Activated naive CD4-positive, alpha-beta T cell treated with anti-CD3 and anti-CD28 coated beads for 36 hours (primary cell): ENCODE measurements at regions of chr18 and their contacts with region 1.

Region 1: DNA sequence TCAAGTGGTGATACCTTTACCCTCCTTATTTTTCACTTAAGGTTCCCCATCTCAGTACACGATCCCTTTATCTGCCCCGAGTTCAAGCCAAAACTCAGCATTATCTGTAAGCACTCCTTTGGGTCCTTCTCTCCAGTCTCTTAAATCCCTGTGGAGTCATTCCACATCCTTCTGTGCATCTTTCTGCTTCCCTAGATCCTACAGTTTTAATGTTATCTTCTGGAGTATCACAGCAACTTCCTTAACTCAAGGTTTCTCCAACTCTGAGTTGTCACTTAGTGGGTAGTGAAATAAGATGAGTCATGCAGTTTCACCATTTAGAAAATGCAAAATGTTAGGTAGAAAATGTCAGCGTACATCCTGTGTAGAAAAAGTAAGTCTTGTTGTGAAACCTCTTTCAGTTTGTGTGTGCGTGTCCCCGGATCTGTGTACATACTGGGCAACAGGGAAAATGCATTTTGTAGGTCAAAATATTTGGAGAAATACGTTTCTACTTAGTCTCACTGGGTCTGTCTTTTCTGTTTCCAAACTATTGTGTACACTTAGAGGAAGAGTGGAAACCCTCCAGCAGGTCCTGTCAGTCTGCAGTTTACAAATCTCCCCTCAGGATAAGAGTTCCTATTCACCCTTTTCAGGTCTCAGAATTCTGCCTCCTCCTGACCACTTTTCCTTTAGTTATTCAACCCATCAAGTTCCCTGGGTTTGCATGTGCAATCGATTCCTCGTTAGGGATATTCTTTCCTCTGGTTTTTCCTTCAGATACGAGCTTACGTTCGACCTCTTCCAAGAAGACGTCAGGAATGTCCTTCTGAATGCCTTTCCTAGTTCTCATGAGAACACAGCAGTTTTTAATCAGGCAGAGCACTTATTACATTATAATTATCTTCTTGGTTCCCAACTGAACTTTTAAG is 154.8 kb downstream of the TGIF1 start:
- DNase-seq: peak; percentile 60
- H3K4me3 Mint-ChIP-seq: no peak overlapping the region
- H3K27ac Mint-ChIP-seq: no peak overlapping the region
- H3K4me1 Mint-ChIP-seq: peaks cover 13% of the 10 kb centered on the region
- H3K27me3 Mint-ChIP-seq: no peaks in the 10 kb centered on the region

Region 2: DNA sequence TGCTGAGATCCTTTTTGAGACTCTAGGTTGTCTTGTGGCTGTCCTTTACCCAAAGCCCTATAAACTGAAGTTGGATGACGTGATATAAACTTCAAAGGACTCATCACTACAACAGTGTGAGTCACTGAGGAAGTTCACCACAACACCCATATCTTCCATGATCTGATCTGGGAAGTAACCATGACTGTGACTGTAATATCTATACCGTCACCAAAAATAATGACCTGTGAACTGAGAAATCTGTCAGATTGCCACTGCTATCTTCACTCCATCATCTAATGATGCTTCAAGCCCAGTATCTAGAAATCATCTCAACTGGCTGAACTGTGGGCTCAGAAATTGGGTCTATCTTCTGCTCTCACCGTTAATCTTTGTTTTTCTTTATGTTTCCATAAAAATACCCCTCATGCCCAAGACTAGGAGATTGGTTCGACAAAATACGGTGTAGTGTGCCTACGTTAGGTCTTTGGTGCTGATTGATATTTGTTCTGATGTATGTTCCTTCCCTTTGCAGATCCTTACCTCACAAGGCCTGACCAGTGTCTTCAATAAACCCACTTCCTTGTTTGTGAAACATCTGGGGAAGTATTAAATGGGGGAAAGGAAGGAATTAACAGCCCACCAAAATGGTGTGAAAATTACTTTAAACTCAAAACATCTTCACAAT is 264.6 kb before region 1 on chr18:
- CTCF ChIA-PET with region 1: no interaction called
- intact Hi-C with region 1: loop called (anchors 1 kb)
- DNase-seq: peak; percentile 26
- H3K4me3 Mint-ChIP-seq: no peak overlapping the region
- H3K27ac Mint-ChIP-seq: peak overlapping the region; percentile 62
- H3K4me1 Mint-ChIP-seq: peaks cover 25% of the 10 kb centered on the region
- H3K27me3 Mint-ChIP-seq: no peaks in the 10 kb centered on the region

Region 3: DNA sequence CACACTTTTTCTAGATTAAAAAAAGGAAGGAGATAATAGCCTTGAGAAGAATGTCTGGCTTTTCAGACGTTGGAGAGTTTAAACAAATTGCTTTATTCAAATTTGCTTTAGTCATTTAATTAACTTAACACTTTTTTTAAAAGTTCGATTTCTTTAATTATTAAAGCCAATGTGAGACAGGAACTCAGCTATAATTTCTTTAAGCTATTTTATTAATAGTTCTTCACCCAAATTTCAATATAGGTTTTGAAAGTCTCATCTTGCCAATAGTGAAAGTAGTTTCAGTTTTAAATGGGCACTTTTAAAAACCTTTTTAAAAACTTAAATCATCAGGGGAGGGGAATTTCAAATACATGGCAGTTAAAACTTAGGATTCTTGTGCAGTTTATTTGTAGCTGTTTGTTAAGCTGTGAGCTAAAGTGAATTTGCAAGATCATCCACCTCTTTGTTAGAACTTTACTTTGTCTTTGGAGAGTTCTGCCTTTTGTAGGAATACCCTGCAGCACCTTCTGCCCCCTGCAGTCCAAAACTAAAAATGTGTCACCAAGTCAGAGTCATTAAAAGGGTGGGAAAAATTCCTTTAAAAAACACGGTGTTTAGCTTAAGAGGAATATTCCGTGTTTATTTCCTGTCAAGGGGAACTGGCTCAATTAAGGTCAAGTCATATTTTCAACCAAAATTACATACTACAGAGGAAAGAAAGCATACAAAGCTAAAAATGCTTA is 150.2 kb before region 1 on chr18:
- CTCF ChIA-PET with region 1: interaction called, 8 read pairs
- intact Hi-C with region 1: loop called (anchors 1 kb)
- DNase-seq: peak; percentile 31
- H3K4me3 Mint-ChIP-seq: peak overlapping the region; percentile 89
- H3K27ac Mint-ChIP-seq: peak overlapping the region; percentile 99
- H3K4me1 Mint-ChIP-seq: peaks cover 63% of the 10 kb centered on the region
- H3K27me3 Mint-ChIP-seq: no peaks in the 10 kb centered on the region

Region 4: GRCh38 chr18:3623769-3624545 is 19.2 kb after region 1 on chr18:
- CTCF ChIA-PET with region 1: interaction called, 6 read pairs
- intact Hi-C with region 1: loop called (anchors 1 kb)
- DNase-seq: peak; percentile 44
- H3K4me3 Mint-ChIP-seq: peak overlapping the region; percentile 28
- H3K27ac Mint-ChIP-seq: peak overlapping the region; percentile 86
- H3K4me1 Mint-ChIP-seq: peaks cover 32% of the 10 kb centered on the region
- H3K27me3 Mint-ChIP-seq: no peaks in the 10 kb centered on the region

Region 5: GRCh38 chr18:3652380-3653262 is 47.9 kb after region 1 on chr18:
- CTCF ChIA-PET with region 1: interaction called, 5 read pairs
- intact Hi-C with region 1: loop called (anchors 2 kb)
- DNase-seq: peak; percentile 84
- H3K4me3 Mint-ChIP-seq: no peak overlapping the region
- H3K27ac Mint-ChIP-seq: peak overlapping the region; percentile 84
- H3K4me1 Mint-ChIP-seq: peaks cover 27% of the 10 kb centered on the region
- H3K27me3 Mint-ChIP-seq: no peaks in the 10 kb centered on the region

Region 6: GRCh38 chr18:3821524-3821923 is 216.8 kb after region 1 on chr18:
- CTCF ChIA-PET with region 1: no interaction called
- intact Hi-C with region 1: no loop called
- DNase-seq: no peak
- H3K4me3 Mint-ChIP-seq: no peak overlapping the region
- H3K27ac Mint-ChIP-seq: no peak overlapping the region
- H3K4me1 Mint-ChIP-seq: no peaks in the 10 kb centered on the region
- H3K27me3 Mint-ChIP-seq: peaks cover 3% of the 10 kb centered on the region